ENCODE measurements at regions of chr1 and their contacts with region 1.

Region 1: DNA sequence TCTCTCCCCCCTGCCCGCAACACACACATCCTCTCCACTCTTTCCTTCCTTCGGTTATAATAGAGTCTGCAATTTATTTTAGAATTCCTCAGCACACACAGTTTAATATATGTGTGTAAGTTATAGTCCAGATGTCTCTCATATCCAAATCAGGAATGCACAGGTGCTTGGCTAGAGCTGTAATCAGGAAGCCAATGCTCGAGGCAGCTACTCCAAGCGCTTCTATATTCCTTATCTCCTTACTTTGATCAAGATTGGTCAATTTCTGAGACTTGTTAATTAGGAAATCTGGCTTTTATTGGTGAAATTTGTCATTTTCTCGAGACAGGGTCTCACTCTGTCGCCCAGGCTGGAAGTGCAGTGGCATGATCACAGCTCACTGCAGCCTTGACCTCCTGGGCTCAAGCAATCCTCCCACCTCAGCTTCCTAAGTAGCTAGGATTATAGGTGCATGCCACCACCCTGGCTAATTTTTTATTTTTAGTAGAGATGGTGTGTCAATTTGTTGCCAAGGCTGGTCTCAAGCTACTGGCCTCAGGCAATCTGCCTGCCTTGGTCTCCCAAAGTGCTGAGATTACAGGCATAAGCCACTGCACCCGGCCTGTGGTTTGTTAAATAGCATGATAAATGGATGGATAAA is 27.7 kb downstream of the RPL5 start:
- DNase-seq: no peak
- ATAC-seq: peak in 1 of 4 donors; percentile 4
- H3K4me3 ChIP-seq: no peak overlapping the region
- H3K27ac ChIP-seq: no peak overlapping the region
- H3K4me1 ChIP-seq: peaks cover 0 to 15% (median 0%) of the 10 kb centered on the region in 4 donors
- H3K27me3 ChIP-seq: no peaks in the 10 kb centered on the region
- CTCF ChIP-seq: no peak
- POLR2A ChIP-seq: no peak

Region 2: GRCh38 chr1:92511541-92511940 is 348.0 kb before region 1 on chr1:
- intact Hi-C with region 1: no loop called
- DNase-seq: no peak
- ATAC-seq: no peak
- H3K4me3 ChIP-seq: no peak overlapping the region
- H3K27ac ChIP-seq: no peak overlapping the region
- H3K4me1 ChIP-seq: no peaks in the 10 kb centered on the region
- H3K27me3 ChIP-seq: no peaks in the 10 kb centered on the region
- CTCF ChIP-seq: no peak
- POLR2A ChIP-seq: no peak

Region 3: DNA sequence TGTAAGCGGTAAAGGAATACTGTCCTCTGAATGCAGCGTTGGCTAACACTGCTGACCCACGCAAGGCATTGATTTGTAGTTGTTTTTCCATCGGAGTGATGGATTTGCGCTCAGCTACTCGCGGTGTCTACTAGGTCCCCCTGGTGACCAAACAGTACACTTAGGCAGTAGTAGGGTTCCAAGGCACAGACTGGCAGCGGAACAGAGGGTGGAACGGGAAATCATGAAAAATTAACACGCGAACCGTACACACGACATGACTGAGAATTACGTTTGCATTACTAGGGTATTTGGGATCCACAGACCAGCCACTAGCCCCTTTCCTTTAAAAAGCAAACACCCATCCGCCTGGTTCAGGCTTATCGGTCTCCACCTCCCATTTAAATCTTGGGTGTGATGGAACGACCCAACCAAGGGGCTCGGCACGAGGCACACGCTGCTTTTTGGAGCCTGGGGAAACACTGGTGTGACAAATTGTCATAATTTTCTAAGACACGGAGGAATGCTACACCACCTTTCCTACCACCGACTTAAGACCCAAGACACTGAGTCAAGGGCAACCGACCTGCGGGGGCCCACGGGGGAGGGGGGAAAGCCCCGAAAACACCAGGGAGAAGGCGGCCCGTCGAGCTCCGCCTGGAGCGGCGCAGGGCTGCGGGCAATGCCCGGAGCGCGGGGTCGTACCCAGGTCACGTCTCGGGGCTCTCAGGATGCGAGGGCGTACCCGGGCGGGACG is 101.0 kb after region 1 on chr1:
- intact Hi-C with region 1: loop called in 1 of 2 experiments (anchors 10 kb)
- DNase-seq: peak; percentile 55 to 78 (median 77)
- ATAC-seq: peak; percentile 78 to 85 (median 80)
- H3K4me3 ChIP-seq: peak overlapping the region; percentile 63 to 89 (median 85)
- H3K27ac ChIP-seq: peak overlapping the region; percentile 81 to 98 (median 94)
- H3K4me1 ChIP-seq: peaks cover 0 to 34% (median 13%) of the 10 kb centered on the region in 4 donors
- H3K27me3 ChIP-seq: no peaks in the 10 kb centered on the region
- CTCF ChIP-seq: peak; percentile 58 to 82 (median 72)
- POLR2A ChIP-seq: peak; percentile 40

Region 4: GRCh38 chr1:92995441-92996430 is 136.2 kb after region 1 on chr1:
- intact Hi-C with region 1: loop called in 1 of 2 experiments (anchors 5 kb)
- DNase-seq: no peak
- ATAC-seq: peak; percentile 9 to 76 (median 37)
- H3K4me3 ChIP-seq: no peak overlapping the region
- H3K27ac ChIP-seq: no peak overlapping the region
- H3K4me1 ChIP-seq: peaks cover 0 to 9% (median 0%) of the 10 kb centered on the region in 4 donors
- H3K27me3 ChIP-seq: no peaks in the 10 kb centered on the region
- CTCF ChIP-seq: no peak
- POLR2A ChIP-seq: no peak